Heart right ventricle (tissue), 16 donors: ENCODE measurements at regions of chr4 and their contacts with region 1.

Region 1: GRCh38 chr4:2241410-2242353 is at the starts of genes HAUS3 and POLN:
- DNase-seq: peak; percentile 98 to 99
- ATAC-seq: peak; percentile 97 to 100 (median 98)
- H3K4me3 ChIP-seq: peak within 1 kb of the TSS; percentile 69 to 97 (median 88)
- H3K27ac ChIP-seq: peak within 1 kb of the TSS in 9 of 10 donors; percentile 65 to 87 (median 79)
- H3K4me1 ChIP-seq: peaks cover 4 to 83% (median 50%) of the 10 kb centered on the region in 9 donors
- H3K27me3 ChIP-seq: no peaks in the 10 kb centered on the region
- CTCF ChIP-seq: no peak
- total RNA-seq, gene HAUS3: 4.0 to 7.3 (median 6.5) TPM
- total RNA-seq, gene POLN: 1.3 to 3.1 (median 2.1) TPM

Region 2: DNA sequence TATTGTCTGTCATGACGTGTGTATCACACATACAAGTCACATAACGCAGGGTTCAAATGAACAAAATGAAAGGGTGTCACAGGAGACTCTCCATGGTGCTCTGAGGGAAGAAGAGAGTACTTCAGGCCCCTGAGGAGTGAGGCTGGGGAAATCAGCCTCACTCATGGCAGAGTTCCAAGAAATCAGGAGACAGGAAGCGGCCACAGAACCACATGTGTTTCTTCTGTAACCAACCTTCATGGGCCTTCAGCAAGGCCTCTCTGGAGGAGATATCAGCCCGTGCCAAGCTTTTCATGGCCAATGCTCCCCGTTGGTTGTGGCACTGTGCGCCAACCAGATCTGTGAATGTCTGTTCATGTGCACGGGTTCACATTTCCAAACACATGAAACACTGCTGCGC is 106.6 kb before region 1 on chr4:
- intact Hi-C with region 1: no loop called
- DNase-seq: no peak
- ATAC-seq: no peak
- H3K4me3 ChIP-seq: no peak overlapping the region
- H3K27ac ChIP-seq: no peak overlapping the region
- H3K4me1 ChIP-seq: peaks cover 0 to 5% (median 0%) of the 10 kb centered on the region in 9 donors
- H3K27me3 ChIP-seq: no peaks in the 10 kb centered on the region
- CTCF ChIP-seq: no peak

Region 3: GRCh38 chr4:2255501-2256155 is 13.9 kb after region 1 on chr4:
- intact Hi-C with region 1: loop called in 2 of 10 experiments (anchors 1 to 2 kb)
- DNase-seq: peak; percentile 24 to 56
- ATAC-seq: peak in 7 of 8 donors; percentile 4 to 43 (median 29)
- H3K4me3 ChIP-seq: peak overlapping the region in 6 of 10 donors; percentile 3 to 30 (median 15)
- H3K27ac ChIP-seq: peak overlapping the region; percentile 72 to 94 (median 91)
- H3K4me1 ChIP-seq: peaks cover 56 to 78% (median 71%) of the 10 kb centered on the region in 9 donors
- H3K27me3 ChIP-seq: no peaks in the 10 kb centered on the region
- CTCF ChIP-seq: no peak

Region 4: GRCh38 chr4:2262143-2262943 is 20.7 kb after region 1 on chr4:
- intact Hi-C with region 1: loop called in 2 of 10 experiments (anchors 2 kb)
- DNase-seq: peak; percentile 99
- ATAC-seq: peak; percentile 91 to 96 (median 94)
- H3K4me3 ChIP-seq: peak overlapping the region; percentile 9 to 99 (median 84)
- H3K27ac ChIP-seq: peak overlapping the region; percentile 95 to 100 (median 98)
- H3K4me1 ChIP-seq: peaks cover 42 to 82% (median 63%) of the 10 kb centered on the region in 9 donors
- H3K27me3 ChIP-seq: no peaks in the 10 kb centered on the region
- CTCF ChIP-seq: no peak

Region 5: GRCh38 chr4:2354118-2354517 is 112.4 kb after region 1 on chr4:
- intact Hi-C with region 1: loop called in 2 of 10 experiments (anchors 10 kb)
- DNase-seq: no peak
- ATAC-seq: peak in 3 of 8 donors; percentile 6 to 17 (median 7)
- H3K4me3 ChIP-seq: no peak overlapping the region
- H3K27ac ChIP-seq: no peak overlapping the region
- H3K4me1 ChIP-seq: peaks cover 0 to 17% (median 14%) of the 10 kb centered on the region in 9 donors
- H3K27me3 ChIP-seq: no peaks in the 10 kb centered on the region
- CTCF ChIP-seq: peak in 6 of 9 donors; percentile 11 to 37 (median 21)

Region 6: GRCh38 chr4:2418650-2419571 is 177.2 kb after region 1 on chr4 and contains the start of gene CFAP99:
- intact Hi-C with region 1: loop called in 3 of 10 experiments (anchors 5 kb)
- DNase-seq: peak; percentile 97 to 99
- ATAC-seq: peak; percentile 95 to 98 (median 97)
- H3K4me3 ChIP-seq: peak within 1 kb of the TSS; percentile 41 to 93 (median 63)
- H3K27ac ChIP-seq: peak within 1 kb of the TSS in 6 of 10 donors; percentile 31 to 71 (median 52)
- H3K4me1 ChIP-seq: peaks cover 3 to 39% (median 21%) of the 10 kb centered on the region in 9 donors
- H3K27me3 ChIP-seq: peaks cover 0 to 71% (median 40%) of the 10 kb centered on the region in 7 donors
- CTCF ChIP-seq: peak in 3 of 9 donors; percentile 33 to 43 (median 36)
- total RNA-seq, gene CFAP99: not detected

Region 7: GRCh38 chr4:2515830-2516550 is 274.3 kb after region 1 on chr4:
- intact Hi-C with region 1: no loop called
- DNase-seq: peak; percentile 45 to 48
- ATAC-seq: peak; percentile 66 to 93 (median 86)
- H3K4me3 ChIP-seq: no peak overlapping the region
- H3K27ac ChIP-seq: peak overlapping the region; percentile 1 to 82 (median 69)
- H3K4me1 ChIP-seq: peaks cover 6 to 22% (median 15%) of the 10 kb centered on the region in 9 donors
- H3K27me3 ChIP-seq: no peaks in the 10 kb centered on the region
- CTCF ChIP-seq: no peak

Region 8: DNA sequence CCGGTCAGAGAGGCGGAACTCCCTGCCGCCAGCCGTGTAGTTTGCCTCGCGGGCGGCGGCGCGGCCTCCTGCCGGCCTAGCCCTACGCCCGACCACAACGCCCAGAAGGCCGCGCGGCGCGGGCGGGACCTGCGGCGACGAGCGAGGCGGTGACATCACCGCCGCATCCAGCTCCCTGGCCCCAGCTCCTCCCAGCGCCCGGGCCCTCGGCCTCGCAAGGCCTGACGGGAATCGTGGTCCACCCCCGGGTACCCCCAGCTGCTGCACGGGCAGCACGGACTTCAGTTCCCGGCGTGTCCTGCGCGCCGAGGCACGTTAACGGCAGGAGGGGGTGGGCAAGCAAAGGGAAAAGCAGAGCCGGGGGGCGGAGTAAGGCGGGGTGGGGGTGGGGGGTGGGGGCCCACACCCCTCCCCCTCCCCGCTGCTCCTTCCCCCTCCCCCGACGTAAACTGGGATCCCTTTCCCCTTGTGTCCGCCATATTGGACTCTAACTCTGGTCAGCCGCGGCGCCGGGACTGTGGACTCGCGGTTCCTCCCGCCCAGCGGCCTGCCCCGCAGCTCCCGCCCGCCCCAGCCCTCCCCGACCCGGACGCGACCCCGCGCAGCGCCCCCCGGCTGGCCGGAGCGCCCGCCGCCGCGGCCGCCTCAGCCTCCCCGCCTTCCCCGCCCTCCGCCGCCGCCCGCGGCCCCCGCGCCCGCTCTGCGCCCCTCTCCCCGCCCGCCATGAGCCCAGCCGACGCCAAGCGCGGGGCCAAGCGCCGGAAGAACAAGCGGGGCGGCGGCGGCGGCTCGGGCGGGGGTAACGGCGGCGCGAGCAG is 294.7 kb after region 1 on chr4 and contains the start of gene FAM193A:
- intact Hi-C with region 1: loop called in 1 of 10 experiments (anchors 5 kb)
- DNase-seq: peak; percentile 99
- ATAC-seq: peak; percentile 97 to 99 (median 98)
- H3K4me3 ChIP-seq: peak within 1 kb of the TSS; percentile 82 to 98 (median 96)
- H3K27ac ChIP-seq: peak within 1 kb of the TSS; percentile 87 to 98 (median 98)
- H3K4me1 ChIP-seq: peaks cover 10 to 39% (median 32%) of the 10 kb centered on the region in 9 donors
- H3K27me3 ChIP-seq: no peaks in the 10 kb centered on the region
- CTCF ChIP-seq: no peak
- total RNA-seq, gene FAM193A: 12.6 to 20.6 (median 16.3) TPM

Region 9: DNA sequence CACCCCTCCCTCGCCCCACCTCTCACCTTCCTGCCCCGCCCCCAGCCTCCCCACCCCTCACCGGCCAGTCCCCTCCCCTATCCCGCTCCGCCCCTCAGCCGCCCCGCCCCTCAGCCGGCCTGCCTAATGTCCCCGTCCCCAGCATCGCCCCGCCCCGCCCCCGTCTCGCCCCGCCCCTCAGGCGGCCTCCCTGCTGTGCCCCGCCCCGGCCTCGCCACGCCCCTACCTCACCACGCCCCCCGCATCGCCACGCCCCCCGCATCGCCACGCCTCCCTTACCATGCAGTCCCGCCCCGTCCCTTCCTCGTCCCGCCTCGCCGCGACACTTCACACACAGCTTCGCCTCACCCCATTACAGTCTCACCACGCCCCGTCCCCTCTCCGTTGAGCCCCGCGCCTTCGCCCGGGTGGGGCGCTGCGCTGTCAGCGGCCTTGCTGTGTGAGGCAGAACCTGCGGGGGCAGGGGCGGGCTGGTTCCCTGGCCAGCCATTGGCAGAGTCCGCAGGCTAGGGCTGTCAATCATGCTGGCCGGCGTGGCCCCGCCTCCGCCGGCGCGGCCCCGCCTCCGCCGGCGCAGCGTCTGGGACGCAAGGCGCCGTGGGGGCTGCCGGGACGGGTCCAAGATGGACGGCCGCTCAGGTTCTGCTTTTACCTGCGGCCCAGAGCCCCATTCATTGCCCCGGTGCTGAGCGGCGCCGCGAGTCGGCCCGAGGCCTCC is 832.6 kb after region 1 on chr4 and contains the starts of genes HTT and HTT-AS:
- intact Hi-C with region 1: loop called in 1 of 10 experiments (anchors 5 kb)
- DNase-seq: peak; percentile 97 to 99
- ATAC-seq: peak; percentile 91 to 96 (median 92)
- H3K4me3 ChIP-seq: peak within 1 kb of the TSS; percentile 73 to 93 (median 82)
- H3K27ac ChIP-seq: peak within 1 kb of the TSS; percentile 16 to 92 (median 86)
- H3K4me1 ChIP-seq: peaks cover 3 to 40% (median 29%) of the 10 kb centered on the region in 9 donors
- H3K27me3 ChIP-seq: no peaks in the 10 kb centered on the region
- CTCF ChIP-seq: peak in 1 of 9 donors; percentile 27
- total RNA-seq, gene HTT: 19.3 to 34.0 (median 24.6) TPM
- total RNA-seq, gene HTT-AS: not detected